Gastrocnemius medialis (tissue), 4 donors: ENCODE measurements at regions of chr12 and their contacts with region 1.

Region 1: DNA sequence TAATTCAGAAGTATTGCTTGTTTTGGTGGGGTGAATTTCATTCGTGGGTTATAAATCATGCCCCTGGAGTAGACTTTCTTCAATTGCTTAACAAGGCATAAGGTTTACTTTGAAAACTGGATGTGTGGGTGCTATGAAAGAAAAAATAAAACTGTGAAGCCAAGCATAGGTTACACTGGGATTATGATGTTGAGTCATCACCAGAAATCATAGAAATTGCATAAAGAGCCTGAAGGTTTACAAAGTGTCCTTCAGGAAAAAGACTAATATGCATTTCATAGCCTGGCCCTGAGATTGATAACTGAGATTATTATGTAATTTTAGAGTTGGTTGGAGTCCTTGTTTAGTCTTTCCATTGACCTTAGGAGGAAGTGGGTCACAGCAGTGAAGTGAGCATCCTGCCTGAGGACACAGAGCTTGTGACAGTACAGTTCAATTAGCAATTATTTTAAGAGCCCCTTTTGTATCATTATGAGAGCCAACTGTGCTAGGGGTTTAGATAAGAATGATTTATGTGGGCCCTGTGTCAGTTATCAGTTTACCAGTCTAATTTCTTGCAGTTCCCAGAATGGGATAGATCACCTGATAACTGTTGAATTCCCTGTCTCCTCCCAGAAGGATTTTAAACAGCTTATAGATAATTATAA is 13.6 kb downstream of the LRRK2 start:
- DNase-seq: no peak
- ATAC-seq: no peak
- H3K4me3 ChIP-seq: no peak overlapping the region
- H3K27ac ChIP-seq: no peak overlapping the region
- H3K4me1 ChIP-seq: no peaks in the 10 kb centered on the region
- H3K27me3 ChIP-seq: no peaks in the 10 kb centered on the region
- CTCF ChIP-seq: no peak
- POLR2A ChIP-seq: no peak

Region 2: GRCh38 chr12:40312982-40313576 is 74.7 kb after region 1 on chr12:
- in situ Hi-C with region 1: no loop called
- intact Hi-C with region 1: loop called (anchors 5 kb)
- DNase-seq: no peak
- ATAC-seq: no peak
- H3K4me3 ChIP-seq: no peak overlapping the region
- H3K27ac ChIP-seq: no peak overlapping the region
- H3K4me1 ChIP-seq: no peaks in the 10 kb centered on the region
- H3K27me3 ChIP-seq: no peaks in the 10 kb centered on the region
- CTCF ChIP-seq: no peak
- POLR2A ChIP-seq: no peak